Left cardiac atrium (tissue), 4 donors: ENCODE measurements at regions of chr3 and their contacts with region 1.

Region 1: DNA sequence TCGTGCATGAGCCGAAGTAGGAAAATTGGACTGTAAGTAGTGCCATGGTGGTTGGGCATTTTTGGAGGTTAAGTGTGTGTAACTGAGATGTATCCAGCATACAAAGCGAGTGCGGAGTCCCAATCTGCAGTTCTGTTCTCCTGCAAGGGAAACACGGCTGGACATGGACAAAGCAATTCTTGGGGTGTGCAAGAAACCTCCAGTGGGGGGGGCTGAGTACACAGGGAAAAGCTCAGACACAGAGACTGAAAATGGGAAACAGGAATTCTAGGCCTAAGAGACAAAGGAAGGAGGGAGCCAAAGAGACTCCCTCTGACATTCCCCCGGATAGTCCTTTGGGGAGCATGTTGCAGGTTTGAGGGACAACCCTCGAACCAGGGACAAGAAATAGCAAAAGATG is 83.2 kb upstream of the PLSCR4 start:
- DNase-seq: peak; percentile 34
- ATAC-seq: peak in 1 of 2 donors; percentile 34

Region 2: DNA sequence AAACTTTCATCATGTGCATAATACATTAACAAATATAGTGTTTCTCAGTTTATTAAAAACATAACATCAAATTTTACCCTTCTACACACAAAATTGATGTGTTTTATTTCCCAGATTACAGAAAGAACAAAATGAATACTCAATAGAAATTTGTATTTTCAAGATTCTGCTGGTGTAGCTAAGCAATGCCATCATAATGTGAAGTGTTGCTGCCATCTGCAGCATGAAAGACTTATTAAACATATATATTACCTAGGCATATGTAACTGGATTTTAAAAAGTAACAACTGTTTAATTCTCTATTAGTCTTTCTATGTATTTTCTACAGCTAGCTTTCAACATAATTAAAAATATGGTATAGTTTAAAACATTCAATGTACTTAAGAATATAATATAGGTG is 243.5 kb after region 1 on chr3:
- intact Hi-C with region 1: loop called (anchors 5 to 10 kb)
- DNase-seq: no peak
- ATAC-seq: peak in 1 of 2 donors; percentile 55

Region 3: GRCh38 chr3:146589899-146590508 is 255.9 kb after region 1 on chr3:
- intact Hi-C with region 1: loop called in 1 of 2 experiments (anchors 10 kb)
- DNase-seq: no peak
- ATAC-seq: no peak